Mammary epithelial cell (primary cell): ENCODE measurements at regions of chr5 and their contacts with region 1.

Region 1: GRCh38 chr5:100535060-100536005 is at the start of gene FAM174A:
- DNase-seq: peak; percentile 92
- H3K4me3 ChIP-seq: peak within 1 kb of the TSS; percentile 82 to 94 (median 86)
- H3K27ac ChIP-seq: peak within 1 kb of the TSS; percentile 76
- H3K4me1 ChIP-seq: peaks cover 27% of the 10 kb centered on the region
- H3K27me3 ChIP-seq: no peaks in the 10 kb centered on the region
- CTCF ChIP-seq: no peak
- total RNA-seq, gene FAM174A: 16.6 to 37.3 TPM

Region 2: DNA sequence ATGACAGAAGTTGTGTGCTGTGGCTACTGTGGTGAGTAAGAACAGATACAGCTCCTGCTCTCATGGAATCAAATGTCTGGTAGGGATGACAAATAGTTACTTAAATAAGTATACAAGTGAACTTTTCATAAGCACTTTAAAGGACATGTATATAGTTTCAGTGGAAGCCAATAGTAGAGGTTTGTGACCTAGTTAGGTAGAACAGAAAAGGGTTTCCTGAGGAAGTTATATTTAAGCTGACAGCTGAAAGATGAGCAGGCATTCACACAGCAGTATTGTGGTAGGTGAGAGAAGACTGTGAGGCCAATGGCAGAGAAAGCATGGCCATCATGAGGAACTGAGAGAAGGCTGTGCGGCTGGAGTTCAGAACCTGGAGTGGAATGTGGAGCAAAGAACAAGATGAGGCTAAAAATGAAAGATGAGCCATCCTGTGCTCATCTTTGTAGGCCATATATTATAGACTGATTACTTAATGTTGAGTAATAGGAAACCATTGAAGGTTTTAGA is 15.3 kb after region 1 on chr5:
- CTCF ChIA-PET with region 1: no interaction called
- dilution Hi-C with region 1: no loop called
- in situ Hi-C with region 1: no loop called
- intact Hi-C with region 1: no loop called
- DNase-seq: no peak
- H3K4me3 ChIP-seq: no peak overlapping the region
- H3K27ac ChIP-seq: no peak overlapping the region
- H3K4me1 ChIP-seq: no peaks in the 10 kb centered on the region
- H3K27me3 ChIP-seq: no peaks in the 10 kb centered on the region
- CTCF ChIP-seq: no peak

Region 3: GRCh38 chr5:100584069-100584468 is 48.7 kb after region 1 on chr5:
- CTCF ChIA-PET with region 1: interaction called, 10 read pairs
- dilution Hi-C with region 1: no loop called
- in situ Hi-C with region 1: no loop called
- intact Hi-C with region 1: no loop called
- DNase-seq: no peak
- H3K4me3 ChIP-seq: no peak overlapping the region
- H3K27ac ChIP-seq: no peak overlapping the region
- H3K4me1 ChIP-seq: no peaks in the 10 kb centered on the region
- H3K27me3 ChIP-seq: no peaks in the 10 kb centered on the region
- CTCF ChIP-seq: no peak

Region 4: GRCh38 chr5:100827481-100827889 is 292.2 kb after region 1 on chr5:
- CTCF ChIA-PET with region 1: no interaction called
- dilution Hi-C with region 1: no loop called
- in situ Hi-C with region 1: no loop called
- intact Hi-C with region 1: no loop called
- DNase-seq: peak; percentile 43
- H3K4me3 ChIP-seq: no peak overlapping the region
- H3K27ac ChIP-seq: no peak overlapping the region
- H3K4me1 ChIP-seq: peaks cover 14% of the 10 kb centered on the region
- H3K27me3 ChIP-seq: no peaks in the 10 kb centered on the region
- CTCF ChIP-seq: no peak